Aorta (tissue), 5 donors: ENCODE measurements at regions of chr6 and their contacts with region 1.

Region 1: GRCh38 chr6:75402296-75402695 is 91.3 kb downstream of the FILIP1 start:
- DNase-seq: peak; percentile 59 to 74
- ATAC-seq: peak; percentile 82
- H3K4me3 ChIP-seq: no peak overlapping the region
- H3K27ac ChIP-seq: peak overlapping the region in 1 of 2 donors; percentile 57
- H3K4me1 ChIP-seq: peaks cover 2 to 17% of the 10 kb centered on the region in 2 donors
- H3K27me3 ChIP-seq: no peaks in the 10 kb centered on the region

Region 2: GRCh38 chr6:75437421-75437891 is 35.2 kb after region 1 on chr6:
- intact Hi-C with region 1: loop called in 1 of 2 experiments (anchors 5 kb)
- DNase-seq: no peak
- ATAC-seq: peak; percentile 96
- H3K4me3 ChIP-seq: no peak overlapping the region
- H3K27ac ChIP-seq: peak overlapping the region; percentile 70 to 82
- H3K4me1 ChIP-seq: peaks cover 9 to 11% of the 10 kb centered on the region in 2 donors
- H3K27me3 ChIP-seq: no peaks in the 10 kb centered on the region